Activated T-helper 1 cell treated with anti-CD3 and anti-CD28 coated beads, Interleukin-12 subunit alpha, Interleukin-12 subunit beta, Interleukin-2, Interleukin-4 antibody, amounts not matched to agents 30 ng/mL and 10 ng/mL and 1 ng/mL, durations not matched to agents 14 hours and 24 hours and 36 hours (primary cell): ENCODE measurements at regions of chr4 and their contacts with region 1.

Region 1: DNA sequence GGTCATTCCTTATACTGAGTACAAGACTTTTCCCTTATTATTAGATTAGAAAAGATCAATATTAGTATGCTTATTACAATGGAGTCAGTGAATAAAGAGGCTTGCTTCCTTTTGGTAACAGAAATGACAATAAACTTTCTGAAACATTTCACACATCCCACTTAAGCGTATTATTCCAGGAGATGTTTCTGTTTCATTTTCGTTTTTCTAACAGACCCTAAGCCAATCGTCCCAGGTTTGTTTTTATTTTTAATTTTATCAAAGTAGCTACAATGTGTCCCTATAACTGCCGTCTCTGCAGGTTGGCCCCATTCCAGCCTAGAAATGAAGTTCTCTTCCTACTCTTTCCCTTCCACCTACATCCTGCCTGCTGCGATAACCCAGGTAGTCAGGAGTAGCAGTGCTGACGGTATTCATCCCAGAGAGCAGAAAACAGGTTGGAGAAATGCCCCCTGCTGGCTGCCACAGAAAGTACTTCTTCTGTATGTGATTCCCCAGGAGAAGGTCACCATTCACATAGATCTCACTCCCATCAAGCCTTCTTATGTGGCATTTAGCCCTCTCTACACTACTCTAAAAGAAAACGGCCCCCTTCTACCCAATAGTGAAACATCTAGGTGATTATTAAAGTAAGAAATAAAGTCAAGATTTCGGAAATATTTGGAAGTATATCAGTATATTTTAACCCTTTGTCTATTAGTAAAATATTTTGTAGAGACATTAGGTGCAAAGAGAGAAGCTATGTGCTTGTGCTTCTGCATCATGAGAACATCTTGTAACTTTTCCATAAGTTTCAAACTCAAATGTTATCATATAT is 40.4 kb downstream of the ENPEP start:
- DNase-seq: peak; percentile 60
- H3K4me3 Mint-ChIP-seq: peak overlapping the region; percentile 83
- H3K27ac Mint-ChIP-seq: peak overlapping the region; percentile 46
- H3K4me1 Mint-ChIP-seq: peaks cover 23% of the 10 kb centered on the region
- H3K27me3 Mint-ChIP-seq: peaks cover 10% of the 10 kb centered on the region

Region 2: DNA sequence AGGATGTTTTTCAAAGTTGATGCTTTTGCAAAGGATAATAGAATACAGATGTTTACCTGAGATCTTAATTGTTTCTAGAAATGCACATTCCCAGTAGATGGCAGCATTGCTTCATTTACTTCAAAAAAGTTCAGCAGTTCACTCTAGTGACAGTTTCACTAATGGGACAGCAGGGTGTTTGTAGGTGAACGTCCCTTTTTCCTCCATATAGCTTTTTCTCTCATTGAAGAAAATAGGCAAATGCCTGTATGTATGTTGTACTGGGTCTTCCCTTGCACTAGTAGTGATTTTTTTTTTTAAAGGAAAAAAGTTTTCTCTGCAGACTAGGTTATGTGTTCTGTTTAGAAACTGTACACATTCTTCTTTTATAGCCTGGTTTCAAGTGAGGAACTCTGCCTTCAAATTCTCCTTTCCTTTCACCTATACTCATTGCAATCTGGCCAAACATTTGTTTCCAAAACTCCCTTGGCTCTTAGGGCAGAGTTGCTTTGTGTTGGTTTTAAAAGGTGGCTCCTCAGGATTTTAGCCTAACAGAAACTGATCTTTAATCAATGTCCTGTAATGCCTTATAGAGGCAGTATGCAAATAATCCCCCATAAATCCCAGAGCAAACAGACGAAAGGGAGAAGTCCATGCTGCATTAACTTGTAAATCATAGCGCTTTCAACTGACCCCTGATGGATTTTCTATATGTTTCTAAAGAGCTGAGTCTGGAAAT is 517.3 kb before region 1 on chr4:
- intact Hi-C with region 1: loop called (anchors 1 kb)
- DNase-seq: peak; percentile 14
- H3K4me3 Mint-ChIP-seq: no peak overlapping the region
- H3K27ac Mint-ChIP-seq: no peak overlapping the region
- H3K4me1 Mint-ChIP-seq: peaks cover 18% of the 10 kb centered on the region
- H3K27me3 Mint-ChIP-seq: peaks cover 4% of the 10 kb centered on the region

Region 3: DNA sequence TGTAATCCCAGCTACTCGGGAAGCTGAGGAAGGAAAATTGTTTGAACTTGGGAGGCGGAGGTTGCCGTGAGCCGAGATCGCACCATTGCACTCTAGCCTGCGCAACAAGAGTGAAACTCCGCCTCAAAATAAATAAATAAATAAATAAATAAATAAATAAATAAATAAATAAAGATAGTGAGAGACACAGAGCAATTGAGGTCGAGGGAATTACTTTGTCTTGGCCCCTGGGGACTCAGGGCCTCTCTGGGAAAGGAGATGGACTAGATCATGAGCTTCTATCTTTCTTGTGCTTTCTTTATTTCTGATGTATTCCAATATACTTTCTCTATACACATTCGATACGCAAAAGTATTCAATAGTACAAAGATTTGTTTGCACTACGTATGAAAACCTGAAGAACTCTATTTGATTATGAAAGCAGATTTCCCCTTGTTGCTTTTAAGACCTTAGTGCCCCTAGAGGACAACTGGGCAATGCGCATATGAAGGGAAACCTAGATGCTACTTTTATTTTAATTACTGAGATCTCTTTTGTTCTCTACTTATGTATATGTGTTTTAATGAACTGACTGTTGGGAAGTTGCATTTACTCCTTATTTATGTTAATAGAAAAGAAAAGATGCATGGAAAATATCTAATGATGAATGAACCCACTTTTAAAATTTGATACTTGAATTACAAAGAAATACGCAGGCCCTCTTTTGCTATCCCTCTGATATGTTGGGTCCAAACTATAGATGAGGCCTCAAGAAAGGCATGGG is 305.1 kb before region 1 on chr4:
- intact Hi-C with region 1: loop called (anchors 5 kb)
- DNase-seq: no peak
- H3K4me3 Mint-ChIP-seq: no peak overlapping the region
- H3K27ac Mint-ChIP-seq: no peak overlapping the region
- H3K4me1 Mint-ChIP-seq: peaks cover 11% of the 10 kb centered on the region
- H3K27me3 Mint-ChIP-seq: peaks cover 4% of the 10 kb centered on the region

Region 4: GRCh38 chr4:110310795-110311194 is 205.5 kb before region 1 on chr4:
- intact Hi-C with region 1: loop called (anchors 1 kb)
- DNase-seq: no peak
- H3K4me3 Mint-ChIP-seq: no peak overlapping the region
- H3K27ac Mint-ChIP-seq: no peak overlapping the region
- H3K4me1 Mint-ChIP-seq: no peaks in the 10 kb centered on the region
- H3K27me3 Mint-ChIP-seq: peaks cover 13% of the 10 kb centered on the region

Region 5: GRCh38 chr4:110527156-110527555 is 10.8 kb after region 1 on chr4:
- intact Hi-C with region 1: loop called (anchors 1 kb)
- DNase-seq: peak; percentile 30
- H3K4me3 Mint-ChIP-seq: peak overlapping the region; percentile 8
- H3K27ac Mint-ChIP-seq: peak overlapping the region; percentile 47
- H3K4me1 Mint-ChIP-seq: peaks cover 20% of the 10 kb centered on the region
- H3K27me3 Mint-ChIP-seq: peaks cover 3% of the 10 kb centered on the region